Heart left ventricle (tissue), 16 donors: ENCODE measurements at regions of chr17 and their contacts with region 1.

Region 1: GRCh38 chr17:19260958-19261357 is 23.8 kb downstream of the EPN2 start:
- DNase-seq: peak in 2 of 5 donors; percentile 29 to 34
- ATAC-seq: no peak
- H3K4me3 ChIP-seq: no peak overlapping the region
- H3K27ac ChIP-seq: peak overlapping the region in 3 of 12 donors; percentile 26 to 84 (median 33)
- H3K4me1 ChIP-seq: peaks cover 25 to 98% (median 65%) of the 10 kb centered on the region in 12 donors
- H3K27me3 ChIP-seq: no peaks in the 10 kb centered on the region
- CTCF ChIP-seq: peak in 2 of 12 donors; percentile 10 to 18
- POLR2A ChIP-seq: no peak

Region 2: DNA sequence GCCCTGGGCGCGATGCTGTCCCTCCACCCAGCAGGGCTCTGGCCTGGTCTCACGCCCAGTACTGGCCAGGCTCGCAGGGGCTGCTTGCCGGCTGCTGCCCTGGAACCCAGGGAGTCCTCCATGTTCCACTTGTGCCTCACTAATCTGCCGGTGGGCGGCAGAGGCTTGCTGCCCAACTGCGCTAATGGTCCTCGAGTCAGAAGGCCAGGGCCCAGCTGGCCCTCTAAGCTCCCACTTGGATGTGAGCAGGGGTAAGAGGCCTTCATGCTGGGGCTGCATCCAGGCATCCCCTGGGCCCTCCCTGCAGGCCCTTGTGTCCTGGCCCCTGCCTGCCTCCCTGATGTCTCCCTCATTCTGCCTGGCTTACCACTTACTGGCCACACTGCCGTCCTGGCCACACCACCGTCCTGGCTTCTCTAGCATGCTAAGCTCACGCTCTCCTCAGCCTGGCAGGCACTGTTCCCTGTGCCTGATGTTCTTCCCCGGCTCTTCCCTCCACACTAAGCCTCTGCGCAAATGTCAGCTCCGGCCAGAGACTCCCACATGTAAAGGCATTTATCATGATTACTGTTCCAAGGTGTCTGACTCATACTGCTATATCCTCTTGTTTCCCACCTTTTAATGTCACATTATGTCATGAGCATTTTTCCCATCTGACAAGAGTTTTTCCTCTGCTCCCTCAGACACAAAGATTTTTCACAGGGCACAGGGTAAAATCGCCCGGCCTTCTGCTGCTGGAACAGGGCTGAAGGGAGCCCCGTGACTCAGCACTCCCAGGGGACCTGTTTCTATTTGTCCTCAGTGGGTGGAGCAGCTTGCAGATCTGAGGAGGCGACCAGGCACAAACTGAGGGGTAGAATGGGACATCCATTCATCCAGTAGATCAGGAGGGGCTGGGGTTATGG is 85.6 kb after region 1 on chr17:
- intact Hi-C with region 1: loop called in 1 of 10 experiments (anchors 5 kb)
- DNase-seq: peak; percentile 78 to 90 (median 82)
- ATAC-seq: peak; percentile 52 to 78 (median 68)
- H3K4me3 ChIP-seq: no peak overlapping the region
- H3K27ac ChIP-seq: peak overlapping the region; percentile 26 to 87 (median 74)
- H3K4me1 ChIP-seq: peaks cover 10 to 60% (median 33%) of the 10 kb centered on the region in 12 donors
- H3K27me3 ChIP-seq: no peaks in the 10 kb centered on the region
- CTCF ChIP-seq: no peak
- POLR2A ChIP-seq: no peak

Region 3: GRCh38 chr17:19507775-19508576 is 247.0 kb after region 1 on chr17:
- intact Hi-C with region 1: no loop called
- DNase-seq: peak; percentile 81 to 89 (median 89)
- ATAC-seq: peak; percentile 79 to 94 (median 92)
- H3K4me3 ChIP-seq: peak overlapping the region; percentile 45 to 82 (median 70)
- H3K27ac ChIP-seq: peak overlapping the region; percentile 65 to 94 (median 80)
- H3K4me1 ChIP-seq: peaks cover 0 to 13% (median 0%) of the 10 kb centered on the region in 12 donors
- H3K27me3 ChIP-seq: no peaks in the 10 kb centered on the region
- CTCF ChIP-seq: no peak
- POLR2A ChIP-seq: peak in 1 of 2 donors; percentile 27